ENCODE measurements at regions of chr13 and their contacts with region 1.

Region 1: DNA sequence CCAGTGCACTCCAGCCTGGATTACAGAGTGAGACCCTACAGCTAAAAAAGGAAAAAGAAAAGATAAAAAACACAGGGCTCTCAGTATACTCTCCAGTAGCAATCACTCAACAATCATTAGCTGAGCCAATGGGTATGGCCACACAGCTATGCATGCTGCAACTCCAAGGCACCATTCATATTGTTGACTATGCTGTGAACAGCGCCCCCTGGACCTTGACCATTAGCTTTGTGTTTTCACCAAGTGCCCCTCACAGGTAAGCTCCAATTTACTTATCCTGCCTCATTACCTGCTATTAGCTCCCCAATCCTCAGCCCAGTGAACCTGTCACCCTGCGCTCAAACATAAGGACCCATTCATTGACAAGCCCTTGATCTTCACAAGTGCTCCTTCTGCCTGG is 35.8 kb downstream of the ZIC5 start:
- DNase-seq: no peak
- H3K27ac ChIP-seq: no peak overlapping the region
- CTCF ChIP-seq: no peak

Region 2: GRCh38 chr13:99911069-99911964 is 24.5 kb before region 1 on chr13:
- CTCF ChIA-PET with region 1: no interaction called
- POLR2A ChIA-PET with region 1: no interaction called
- DNase-seq: no peak
- H3K27ac ChIP-seq: no peak overlapping the region
- CTCF ChIP-seq: no peak

Region 3: DNA sequence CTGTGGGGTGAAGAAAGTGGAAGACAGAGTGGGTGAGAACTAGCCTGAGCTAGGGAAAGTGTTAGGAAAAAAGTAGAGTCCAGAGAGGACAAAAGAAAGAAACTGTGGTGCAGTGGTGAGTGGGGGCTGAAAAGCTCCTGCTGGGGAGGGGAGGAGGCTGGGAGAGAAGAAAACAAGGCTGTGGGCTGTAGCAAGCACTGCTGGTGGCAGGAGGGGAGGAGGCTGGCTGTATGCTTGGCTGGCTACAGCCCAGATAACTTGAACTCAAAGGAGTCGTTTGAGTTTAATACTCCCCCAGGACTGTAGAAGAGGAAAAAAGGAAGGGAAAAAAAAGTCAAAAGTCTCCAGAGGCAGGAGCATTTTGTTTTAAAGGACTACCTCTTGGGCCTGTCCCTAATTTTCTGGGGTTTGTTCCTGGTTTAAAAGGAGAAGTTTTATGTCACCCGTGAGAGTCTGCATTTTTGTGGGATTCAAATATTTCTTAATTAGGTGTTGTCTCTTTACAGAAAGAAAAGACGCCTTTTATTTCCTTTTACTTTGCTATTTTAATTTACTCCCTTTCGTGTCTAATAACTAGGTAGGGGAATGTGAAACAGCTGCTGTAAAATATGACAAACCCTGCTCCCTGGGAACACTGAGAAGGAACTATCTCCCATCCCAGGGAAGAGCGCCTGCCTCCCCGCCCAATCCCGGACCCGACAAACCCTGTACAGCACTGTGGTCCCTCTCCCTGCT is 14.1 kb after region 1 on chr13:
- CTCF ChIA-PET with region 1: interaction called, 11 read pairs
- POLR2A ChIA-PET with region 1: no interaction called
- DNase-seq: no peak
- H3K27ac ChIP-seq: no peak overlapping the region
- CTCF ChIP-seq: no peak